Activated CD8-positive, alpha-beta T cell treated with anti-CD3 and anti-CD28 coated beads for 36 hours (primary cell): ENCODE measurements at regions of chr6 and their contacts with region 1.

Region 1: GRCh38 chr6:142885182-142885867 is 59.7 kb downstream of the HIVEP2 start:
- DNase-seq: peak; percentile 58
- ATAC-seq: peak; percentile 81
- H3K4me3 Mint-ChIP-seq: peak overlapping the region; percentile 90
- H3K27ac Mint-ChIP-seq: peak overlapping the region; percentile 100
- H3K4me1 Mint-ChIP-seq: peaks cover 85% of the 10 kb centered on the region
- H3K27me3 Mint-ChIP-seq: no peaks in the 10 kb centered on the region
- CTCF ChIP-seq: no peak

Region 2: GRCh38 chr6:142500250-142500786 is 385.0 kb before region 1 on chr6:
- CTCF ChIA-PET with region 1: no interaction called
- POLR2A ChIA-PET with region 1: no interaction called
- intact Hi-C with region 1: no loop called
- DNase-seq: no peak
- ATAC-seq: no peak
- H3K4me3 Mint-ChIP-seq: no peak overlapping the region
- H3K27ac Mint-ChIP-seq: no peak overlapping the region
- H3K4me1 Mint-ChIP-seq: no peaks in the 10 kb centered on the region
- H3K27me3 Mint-ChIP-seq: no peaks in the 10 kb centered on the region
- CTCF ChIP-seq: no peak

Region 3: DNA sequence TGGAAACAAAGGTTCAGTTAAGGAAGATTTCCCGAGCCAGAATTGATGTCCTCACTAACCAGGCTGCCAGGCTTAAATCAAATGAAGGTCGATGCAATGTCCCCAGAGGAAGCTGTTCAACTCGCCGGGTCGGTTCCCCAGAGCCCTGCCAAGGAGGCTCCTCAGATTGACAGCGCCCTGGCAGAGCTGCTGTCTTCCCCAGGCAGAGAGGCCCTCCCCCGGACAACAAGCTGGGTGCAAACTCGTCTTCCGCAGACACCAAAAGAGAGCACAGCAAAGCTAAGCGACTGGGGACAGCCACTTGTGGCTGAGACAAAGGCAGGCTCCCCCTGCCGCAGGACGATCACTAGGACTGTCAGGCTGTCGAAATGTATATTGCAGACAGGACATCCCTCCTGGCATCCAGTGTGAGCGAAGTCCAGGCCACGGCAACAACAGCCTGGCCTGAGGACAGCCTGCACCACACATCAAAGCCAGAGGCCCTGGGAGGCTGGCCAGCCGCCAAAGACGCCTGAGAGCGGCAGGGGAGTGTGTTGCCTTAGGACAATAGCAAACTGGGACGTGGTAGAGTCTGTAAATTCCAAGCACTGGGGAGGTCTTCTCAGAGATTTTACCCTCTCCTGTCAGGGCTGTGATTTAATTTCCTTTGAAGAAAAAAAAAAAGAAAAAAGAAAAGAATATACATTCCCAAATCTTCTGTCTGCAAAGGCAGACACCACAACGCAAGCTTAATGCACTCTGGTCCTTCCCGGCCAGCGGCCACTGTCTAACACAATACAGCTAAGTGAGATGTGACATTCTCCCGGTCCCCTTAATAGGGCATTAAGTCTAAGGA is 39.5 kb before region 1 on chr6:
- CTCF ChIA-PET with region 1: interaction called, 9 read pairs
- POLR2A ChIA-PET with region 1: interaction called, 13 read pairs
- intact Hi-C with region 1: loop called (anchors 2 kb)
- DNase-seq: peak; percentile 71
- ATAC-seq: peak; percentile 29
- H3K4me3 Mint-ChIP-seq: peak overlapping the region; percentile 67
- H3K27ac Mint-ChIP-seq: peak overlapping the region; percentile 92
- H3K4me1 Mint-ChIP-seq: peaks cover 88% of the 10 kb centered on the region
- H3K27me3 Mint-ChIP-seq: no peaks in the 10 kb centered on the region
- CTCF ChIP-seq: no peak

Region 4: DNA sequence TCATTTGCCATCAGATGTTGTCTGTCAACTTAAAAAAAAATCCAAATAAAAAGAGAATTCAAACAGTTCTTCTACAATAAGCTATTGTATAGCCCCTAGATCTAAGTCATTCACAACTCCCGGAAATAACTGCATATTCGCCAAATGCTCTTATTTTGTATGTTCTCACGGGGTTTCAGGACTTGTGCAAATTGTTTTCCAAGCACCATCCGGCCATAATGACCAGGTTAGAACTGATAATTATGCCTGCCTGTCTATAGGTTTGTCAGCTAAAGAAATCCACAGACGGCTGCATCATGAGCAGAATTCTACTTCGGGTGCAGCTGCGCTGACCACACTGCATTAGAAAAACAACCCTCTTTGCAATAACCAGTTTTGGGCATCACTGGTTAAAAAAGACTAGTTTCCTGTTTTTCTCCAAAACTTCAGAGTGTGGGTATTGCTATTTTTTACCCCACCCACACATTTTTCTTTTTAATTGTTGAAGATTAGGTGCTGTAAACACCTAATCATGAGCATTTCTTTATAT is 28.0 kb before region 1 on chr6:
- CTCF ChIA-PET with region 1: interaction called, 6 read pairs
- POLR2A ChIA-PET with region 1: interaction called, 15 read pairs
- intact Hi-C with region 1: no loop called
- DNase-seq: peak; percentile 37
- ATAC-seq: peak; percentile 7
- H3K4me3 Mint-ChIP-seq: peak overlapping the region; percentile 69
- H3K27ac Mint-ChIP-seq: peak overlapping the region; percentile 85
- H3K4me1 Mint-ChIP-seq: peaks cover 90% of the 10 kb centered on the region
- H3K27me3 Mint-ChIP-seq: no peaks in the 10 kb centered on the region
- CTCF ChIP-seq: no peak

Region 5: DNA sequence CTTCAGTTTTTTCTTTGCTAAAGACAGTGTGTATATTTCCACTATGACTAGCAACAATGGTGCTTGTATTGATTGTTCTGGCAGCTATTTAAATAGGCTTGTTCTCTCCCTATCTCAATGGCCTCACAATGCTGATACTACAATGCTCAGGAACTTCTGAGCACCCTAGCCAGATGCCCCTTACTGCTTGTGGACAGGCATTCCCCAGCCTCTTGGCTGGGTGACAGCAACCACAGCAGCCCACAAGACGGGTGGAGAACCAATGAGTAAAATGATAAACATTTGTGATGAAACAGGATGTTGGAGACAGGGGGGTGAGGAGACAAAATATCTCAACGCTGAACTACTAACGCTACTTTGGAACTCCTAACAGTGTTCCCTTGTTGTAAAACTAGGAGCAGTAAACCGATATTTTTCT is 17.3 kb after region 1 on chr6:
- CTCF ChIA-PET with region 1: interaction called, 4 read pairs
- POLR2A ChIA-PET with region 1: interaction called, 8 read pairs
- intact Hi-C with region 1: loop called (anchors 2 kb)
- DNase-seq: peak; percentile 90
- ATAC-seq: peak; percentile 61
- H3K4me3 Mint-ChIP-seq: peak overlapping the region; percentile 50
- H3K27ac Mint-ChIP-seq: peak overlapping the region; percentile 86
- H3K4me1 Mint-ChIP-seq: peaks cover 64% of the 10 kb centered on the region
- H3K27me3 Mint-ChIP-seq: no peaks in the 10 kb centered on the region
- CTCF ChIP-seq: no peak

Region 6: DNA sequence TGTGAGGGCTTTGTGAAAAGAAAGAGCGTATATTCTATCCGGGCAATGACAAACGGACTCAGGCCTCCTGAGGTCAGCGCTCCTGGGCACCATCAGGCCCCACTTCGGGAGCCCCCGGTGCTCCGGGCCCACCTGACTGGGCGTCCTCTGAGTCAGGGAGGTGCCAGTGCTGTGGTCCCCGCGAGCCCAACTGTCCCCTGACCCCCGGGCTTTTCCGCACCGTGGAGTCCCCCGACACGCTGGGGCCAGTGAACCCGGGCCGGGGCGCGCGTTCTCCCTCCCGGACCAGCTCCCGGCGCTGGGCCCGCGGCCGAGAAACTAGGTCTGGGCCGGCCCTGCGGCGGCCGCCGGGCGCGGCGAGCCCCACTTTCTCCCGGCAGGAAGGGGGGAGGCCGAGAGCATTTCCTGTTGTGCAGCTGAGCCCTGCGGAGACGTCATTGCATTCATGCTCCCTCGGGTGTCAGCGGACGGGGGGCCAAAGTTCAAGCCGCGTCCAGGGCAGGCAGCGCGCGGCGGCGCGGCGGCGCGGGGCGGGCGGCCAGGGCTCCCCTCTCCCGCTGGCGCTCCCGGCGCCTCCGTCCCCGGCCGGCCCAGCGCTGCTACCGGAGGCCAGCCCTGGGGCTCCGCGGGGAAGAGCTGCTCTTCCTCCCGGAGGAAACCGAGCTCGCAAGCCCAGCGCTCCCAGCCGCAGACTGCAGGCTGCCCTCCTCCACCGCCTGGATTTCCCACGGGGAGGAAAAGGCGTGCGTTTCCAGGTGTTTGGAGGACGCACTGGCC is 41.4 kb after region 1 on chr6:
- CTCF ChIA-PET with region 1: interaction called, 5 read pairs
- POLR2A ChIA-PET with region 1: interaction called, 7 read pairs
- intact Hi-C with region 1: loop called (anchors 5 kb)
- DNase-seq: peak; percentile 90
- ATAC-seq: peak; percentile 85
- H3K4me3 Mint-ChIP-seq: peak overlapping the region; percentile 96
- H3K27ac Mint-ChIP-seq: peak overlapping the region; percentile 97
- H3K4me1 Mint-ChIP-seq: peaks cover 55% of the 10 kb centered on the region
- H3K27me3 Mint-ChIP-seq: no peaks in the 10 kb centered on the region
- CTCF ChIP-seq: no peak